ENCODE measurements at regions of chr7 and their contacts with region 1.

Region 1: GRCh38 chr7:22934473-22935065 is 79.4 kb downstream of the HYCC1 start:
- DNase-seq: no peak
- H3K4me3 ChIP-seq: no peak overlapping the region
- H3K27ac ChIP-seq: peak overlapping the region; percentile 63 to 74
- H3K4me1 ChIP-seq: peaks cover 0 to 15% of the 10 kb centered on the region in 2 donors
- H3K27me3 ChIP-seq: no peaks in the 10 kb centered on the region
- CTCF ChIP-seq: no peak

Region 2: DNA sequence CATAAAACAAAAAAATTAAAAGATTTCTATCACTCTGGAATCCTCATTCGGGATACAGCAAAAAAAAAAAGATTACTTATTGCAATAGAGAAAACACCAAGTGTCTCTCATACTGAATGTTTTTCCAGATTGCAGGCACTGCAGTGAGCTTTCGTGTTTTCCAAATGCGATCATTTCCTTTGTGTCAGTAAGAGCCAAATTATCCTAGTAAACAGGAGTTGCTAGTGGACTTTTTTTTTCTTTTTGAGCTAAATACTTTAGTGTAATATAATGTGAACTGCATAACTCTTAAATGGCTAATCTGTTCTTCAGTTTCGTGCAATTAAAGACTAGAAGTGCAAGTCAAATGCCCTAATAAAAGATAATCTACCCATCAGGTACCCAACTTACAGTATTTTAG is 67.6 kb before region 1 on chr7:
- intact Hi-C with region 1: loop called (anchors 5 kb)
- DNase-seq: no peak
- H3K4me3 ChIP-seq: no peak overlapping the region
- H3K27ac ChIP-seq: peak overlapping the region in 1 of 2 donors; percentile 42
- H3K4me1 ChIP-seq: peaks cover 0 to 10% of the 10 kb centered on the region in 2 donors
- H3K27me3 ChIP-seq: no peaks in the 10 kb centered on the region
- CTCF ChIP-seq: no peak

Region 3: DNA sequence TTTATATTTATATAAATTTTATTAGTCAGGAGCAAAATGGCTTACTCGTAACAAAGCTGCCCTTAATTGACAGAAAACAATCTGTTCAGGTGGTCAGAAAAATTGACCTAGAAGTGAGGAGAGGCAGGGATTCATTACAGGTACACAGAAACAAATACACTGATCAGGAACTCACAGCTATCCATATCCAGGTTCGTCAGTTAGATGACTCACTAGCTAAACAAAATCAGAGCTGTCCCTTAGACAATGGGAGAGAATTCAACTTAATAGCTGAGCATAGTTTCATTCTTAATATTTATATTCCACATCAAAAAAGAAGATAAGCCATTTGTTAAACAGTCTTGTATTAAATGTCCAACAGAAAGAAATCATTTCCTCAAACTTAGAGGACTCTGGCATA is 37.6 kb after region 1 on chr7:
- intact Hi-C with region 1: loop called (anchors 5 kb)
- DNase-seq: no peak
- H3K4me3 ChIP-seq: no peak overlapping the region
- H3K27ac ChIP-seq: no peak overlapping the region
- H3K4me1 ChIP-seq: no peaks in the 10 kb centered on the region
- H3K27me3 ChIP-seq: no peaks in the 10 kb centered on the region
- CTCF ChIP-seq: no peak

Region 4: GRCh38 chr7:23074443-23075261 is 140.1 kb after region 1 on chr7:
- intact Hi-C with region 1: no loop called
- DNase-seq: no peak
- H3K4me3 ChIP-seq: no peak overlapping the region
- H3K27ac ChIP-seq: peak overlapping the region; percentile 22 to 67
- H3K4me1 ChIP-seq: peaks cover 4 to 19% of the 10 kb centered on the region in 2 donors
- H3K27me3 ChIP-seq: no peaks in the 10 kb centered on the region
- CTCF ChIP-seq: no peak

Measured in ascending aorta (tissue), 2 donors.